GM12878 (cell line): ENCODE measurements at regions of chr13 and their contacts with region 1.

Region 1: GRCh38 chr13:41013835-41014234 is 5.3 kb downstream of the ELF1 start:
- DNase-seq: no peak
- ATAC-seq: peak; percentile 46
- H3K4me3 ChIP-seq: peak overlapping the region; percentile 75
- H3K27ac ChIP-seq: no peak overlapping the region
- H3K4me1 ChIP-seq: peaks cover 18% of the 10 kb centered on the region
- H3K27me3 ChIP-seq: no peaks in the 10 kb centered on the region
- CTCF ChIP-seq: no peak
- EP300 ChIP-seq: no peak
- POLR2A ChIP-seq: no peak
- RAD21 ChIP-seq: no peak

Region 2: GRCh38 chr13:40963919-40964318 is 49.9 kb before region 1 on chr13:
- CTCF ChIA-PET with region 1: interaction called, 5 read pairs
- POLR2A ChIA-PET with region 1: interaction called, 7 read pairs
- RAD21 ChIA-PET with region 1: interaction called, 11 read pairs
- SMC1A ChIA-PET with region 1: interaction called, 8 read pairs
- in situ Hi-C with region 1: no loop called
- intact Hi-C with region 1: no loop called
- DNase-seq: no peak
- ATAC-seq: peak; percentile 39
- H3K4me3 ChIP-seq: no peak overlapping the region
- H3K27ac ChIP-seq: no peak overlapping the region; the same call in 1 of the 2 replicates
- H3K4me1 ChIP-seq: peaks cover 46% of the 10 kb centered on the region
- H3K27me3 ChIP-seq: no peaks in the 10 kb centered on the region
- CTCF ChIP-seq: no peak
- EP300 ChIP-seq: no peak
- POLR2A ChIP-seq: no peak
- RAD21 ChIP-seq: no peak

Region 3: DNA sequence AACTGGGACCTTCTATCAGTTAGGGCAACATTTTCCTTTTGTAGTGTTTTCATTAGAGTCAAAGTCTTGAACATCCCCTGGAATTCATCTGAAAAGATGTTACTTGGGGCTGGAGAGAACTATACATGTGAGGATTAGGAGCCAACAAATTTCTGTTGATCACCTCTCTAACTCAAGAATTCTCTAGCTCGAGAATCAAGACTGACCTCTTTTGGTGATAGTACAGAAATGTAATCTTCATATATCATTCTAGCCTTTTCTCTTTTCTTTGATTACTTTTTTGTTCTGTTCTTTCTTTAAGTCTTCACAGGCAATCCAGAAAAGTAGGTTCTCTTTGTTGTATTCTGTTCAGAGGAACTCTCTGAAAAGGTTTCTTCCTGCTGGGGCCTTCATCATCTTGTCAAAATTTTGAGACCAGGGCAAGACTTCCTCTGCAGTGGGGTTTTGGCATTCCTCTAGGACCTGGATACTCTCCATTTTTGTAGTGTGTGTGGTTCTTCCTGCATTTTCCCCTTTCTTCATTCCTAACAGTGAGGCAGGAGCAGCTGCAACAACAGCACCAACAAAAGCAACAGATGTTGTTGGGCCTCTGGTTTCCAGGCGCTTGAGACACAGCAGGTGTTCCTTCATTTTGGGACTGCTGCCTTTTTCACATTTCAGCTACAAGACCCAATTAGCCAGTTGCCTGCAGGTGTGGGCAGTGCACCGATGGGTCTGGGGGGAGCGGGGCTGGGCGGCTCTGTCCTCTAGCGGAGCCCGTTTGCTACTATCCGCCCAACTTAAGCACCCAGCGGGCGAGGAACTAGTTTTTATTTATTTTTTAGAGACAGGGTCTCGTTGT is 20.9 kb before region 1 on chr13:
- CTCF ChIA-PET with region 1: interaction called, 14 read pairs
- POLR2A ChIA-PET with region 1: interaction called, 6 read pairs
- RAD21 ChIA-PET with region 1: interaction called, 39 read pairs
- SMC1A ChIA-PET with region 1: interaction called, 308 read pairs
- in situ Hi-C with region 1: no loop called
- intact Hi-C with region 1: no loop called
- DNase-seq: no peak
- ATAC-seq: peak; percentile 34
- H3K4me3 ChIP-seq: no peak overlapping the region; the same call in 1 of the 2 replicates
- H3K27ac ChIP-seq: peak overlapping the region; percentile 92
- H3K4me1 ChIP-seq: peaks cover 46% of the 10 kb centered on the region
- H3K27me3 ChIP-seq: no peaks in the 10 kb centered on the region
- CTCF ChIP-seq: peak; percentile 10 to 49 (median 12); a peak in 4 of 6 replicates
- EP300 ChIP-seq: no peak
- POLR2A ChIP-seq: no peak
- RAD21 ChIP-seq: peak; percentile 51

Region 4: GRCh38 chr13:41111454-41111853 is 97.6 kb after region 1 on chr13:
- CTCF ChIA-PET with region 1: no interaction called
- POLR2A ChIA-PET with region 1: no interaction called
- RAD21 ChIA-PET with region 1: no interaction called
- SMC1A ChIA-PET with region 1: no interaction called
- in situ Hi-C with region 1: no loop called
- intact Hi-C with region 1: no loop called
- DNase-seq: no peak
- ATAC-seq: no peak
- H3K4me3 ChIP-seq: no peak overlapping the region
- H3K27ac ChIP-seq: no peak overlapping the region
- H3K4me1 ChIP-seq: no peaks in the 10 kb centered on the region
- H3K27me3 ChIP-seq: no peaks in the 10 kb centered on the region
- CTCF ChIP-seq: no peak
- EP300 ChIP-seq: no peak
- POLR2A ChIP-seq: no peak
- RAD21 ChIP-seq: no peak